ENCODE measurements at regions of chr18 and their contacts with region 1.

Region 1: GRCh38 chr18:48777026-48777743 is 173.6 kb downstream of the SMAD7 start:
- DNase-seq: peak; percentile 64 to 76 (median 73)
- ATAC-seq: peak; percentile 66
- H3K4me3 ChIP-seq: no peak overlapping the region
- H3K27ac ChIP-seq: no peak overlapping the region
- H3K4me1 ChIP-seq: peaks cover 18 to 32% of the 10 kb centered on the region in 2 experiments
- H3K27me3 ChIP-seq: no peaks in the 10 kb centered on the region
- CTCF ChIP-seq: peak; percentile 76 to 84 (median 81)
- EP300 ChIP-seq: no peak
- POLR2A ChIP-seq: no peak
- RAD21 ChIP-seq: peak; percentile 85 to 88

Region 2: GRCh38 chr18:48680339-48681221 is 96.6 kb before region 1 on chr18:
- CTCF ChIA-PET with region 1: no interaction called
- POLR2A ChIA-PET with region 1: no interaction called
- in situ Hi-C with region 1: loop called (anchors 10 kb)
- intact Hi-C with region 1: loop called (anchors 2 kb)
- DNase-seq: no peak
- ATAC-seq: no peak
- H3K4me3 ChIP-seq: no peak overlapping the region
- H3K27ac ChIP-seq: no peak overlapping the region
- H3K4me1 ChIP-seq: peaks cover 0 to under 1% of the 10 kb centered on the region in 2 experiments; a peak in 2 of 5 replicates
- H3K27me3 ChIP-seq: no peaks in the 10 kb centered on the region
- CTCF ChIP-seq: no peak
- EP300 ChIP-seq: no peak
- POLR2A ChIP-seq: no peak
- RAD21 ChIP-seq: no peak

Region 3: GRCh38 chr18:48896690-48897511 is 119.7 kb after region 1 on chr18:
- CTCF ChIA-PET with region 1: no interaction called
- POLR2A ChIA-PET with region 1: no interaction called
- in situ Hi-C with region 1: no loop called
- intact Hi-C with region 1: loop called (anchors 10 kb)
- DNase-seq: peak; percentile 85 to 95 (median 88)
- ATAC-seq: peak; percentile 99
- H3K4me3 ChIP-seq: no peak overlapping the region
- H3K27ac ChIP-seq: peak overlapping the region; percentile 54; the same call in 2 of the 3 replicates
- H3K4me1 ChIP-seq: peaks cover 16 to 33% of the 10 kb centered on the region in 2 experiments
- H3K27me3 ChIP-seq: no peaks in the 10 kb centered on the region
- CTCF ChIP-seq: peak; percentile 51 to 76 (median 63)
- EP300 ChIP-seq: peak; percentile 51
- POLR2A ChIP-seq: no peak
- RAD21 ChIP-seq: peak; percentile 64 to 70

Region 4: DNA sequence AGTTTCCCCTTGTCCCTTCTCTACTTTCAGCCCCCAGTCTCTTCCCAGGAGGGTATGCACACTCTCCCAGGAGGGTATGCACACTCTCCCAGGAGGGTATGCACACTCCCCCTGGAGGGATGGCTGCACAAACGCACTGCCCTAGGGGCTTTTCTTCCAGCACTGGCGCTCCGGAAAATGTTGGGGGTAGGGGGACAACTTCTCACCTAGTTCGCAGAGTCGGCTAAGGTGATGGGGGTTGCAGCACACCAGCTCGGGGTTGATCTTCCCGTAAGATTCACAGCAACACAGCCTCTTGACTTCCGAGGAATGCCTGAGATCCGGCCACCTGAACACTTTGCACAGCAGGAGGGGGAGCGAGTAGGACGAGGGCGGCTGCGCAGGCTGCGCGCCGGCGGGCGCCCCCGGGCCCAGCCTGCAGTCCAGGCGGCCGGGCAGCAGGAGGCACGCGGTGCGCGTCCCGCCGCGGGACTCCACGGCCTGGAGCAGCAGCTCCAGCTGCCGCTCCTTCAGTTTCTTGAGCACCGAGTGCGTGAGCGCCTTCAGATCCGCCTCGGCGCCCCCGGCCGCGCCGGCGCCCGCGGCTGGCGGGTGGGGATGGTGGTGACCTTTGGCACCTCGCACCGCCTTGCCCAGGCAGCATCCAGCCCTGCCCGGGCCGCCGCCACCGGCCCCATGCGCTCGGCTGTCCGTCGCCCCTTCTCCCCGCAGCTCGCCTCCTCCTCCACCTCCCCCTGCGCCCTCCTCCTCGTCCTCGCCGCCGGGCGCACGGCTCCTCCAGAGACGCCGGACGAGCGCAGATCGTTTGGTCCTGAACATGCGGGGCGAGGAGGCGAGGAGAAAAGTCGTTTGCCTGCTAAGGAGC is 172.7 kb after region 1 on chr18:
- CTCF ChIA-PET with region 1: no interaction called
- POLR2A ChIA-PET with region 1: no interaction called
- in situ Hi-C with region 1: no loop called
- intact Hi-C with region 1: loop called (anchors 5 kb)
- DNase-seq: peak in 2 of 4 experiments; percentile 27 to 33
- ATAC-seq: peak; percentile 50
- H3K4me3 ChIP-seq: peak overlapping the region; percentile 38
- H3K27ac ChIP-seq: no peak overlapping the region; the same call in 2 of the 3 replicates
- H3K4me1 ChIP-seq: peaks cover 9 to 45% of the 10 kb centered on the region in 2 experiments
- H3K27me3 ChIP-seq: peaks cover 0 to 12% of the 10 kb centered on the region in 2 experiments; a peak in 2 of 5 replicates
- CTCF ChIP-seq: peak in 2 of 3 experiments; percentile 9 to 28; a peak in 2 of 6 replicates
- EP300 ChIP-seq: no peak
- POLR2A ChIP-seq: no peak
- RAD21 ChIP-seq: peak; percentile 26 to 41; a peak in 2 of 4 replicates

Region 5: DNA sequence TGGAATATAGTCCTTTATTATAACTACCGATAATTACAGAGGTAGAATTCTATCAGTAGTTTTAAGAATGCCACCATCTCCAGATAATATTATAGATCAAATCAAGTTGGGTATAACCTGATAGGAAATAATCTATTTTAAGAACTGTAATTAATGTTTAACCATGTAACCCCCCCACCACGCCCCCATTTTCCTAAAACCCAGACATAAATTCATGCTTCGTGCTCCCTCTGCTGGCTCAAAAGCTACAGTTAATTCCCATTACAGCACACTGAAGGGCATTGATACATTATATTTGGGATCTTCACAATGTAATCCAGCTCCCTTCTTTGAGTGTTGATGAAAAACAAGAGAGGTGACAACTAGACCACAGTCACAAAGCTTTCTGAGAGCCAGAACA is 401.6 kb after region 1 on chr18:
- CTCF ChIA-PET with region 1: interaction called, 3 read pairs
- POLR2A ChIA-PET with region 1: no interaction called
- in situ Hi-C with region 1: no loop called
- intact Hi-C with region 1: loop called (anchors 2 kb)
- DNase-seq: peak; percentile 19 to 52 (median 26)
- ATAC-seq: peak; percentile 55; the same call in 1 of the 3 replicates
- H3K4me3 ChIP-seq: no peak overlapping the region
- H3K27ac ChIP-seq: no peak overlapping the region
- H3K4me1 ChIP-seq: no peaks in the 10 kb centered on the region
- H3K27me3 ChIP-seq: no peaks in the 10 kb centered on the region
- CTCF ChIP-seq: peak; percentile 52 to 61 (median 58); a peak in 5 of 6 replicates
- EP300 ChIP-seq: no peak
- POLR2A ChIP-seq: no peak
- RAD21 ChIP-seq: peak; percentile 60 to 76

Measured in K562 (cell line).